ENCODE measurements at regions of chr12 and their contacts with region 1.

Region 1: GRCh38 chr12:104671407-104672098 is 214.8 kb downstream of the CHST11 start:
- DNase-seq: peak; percentile 94

Region 2: DNA sequence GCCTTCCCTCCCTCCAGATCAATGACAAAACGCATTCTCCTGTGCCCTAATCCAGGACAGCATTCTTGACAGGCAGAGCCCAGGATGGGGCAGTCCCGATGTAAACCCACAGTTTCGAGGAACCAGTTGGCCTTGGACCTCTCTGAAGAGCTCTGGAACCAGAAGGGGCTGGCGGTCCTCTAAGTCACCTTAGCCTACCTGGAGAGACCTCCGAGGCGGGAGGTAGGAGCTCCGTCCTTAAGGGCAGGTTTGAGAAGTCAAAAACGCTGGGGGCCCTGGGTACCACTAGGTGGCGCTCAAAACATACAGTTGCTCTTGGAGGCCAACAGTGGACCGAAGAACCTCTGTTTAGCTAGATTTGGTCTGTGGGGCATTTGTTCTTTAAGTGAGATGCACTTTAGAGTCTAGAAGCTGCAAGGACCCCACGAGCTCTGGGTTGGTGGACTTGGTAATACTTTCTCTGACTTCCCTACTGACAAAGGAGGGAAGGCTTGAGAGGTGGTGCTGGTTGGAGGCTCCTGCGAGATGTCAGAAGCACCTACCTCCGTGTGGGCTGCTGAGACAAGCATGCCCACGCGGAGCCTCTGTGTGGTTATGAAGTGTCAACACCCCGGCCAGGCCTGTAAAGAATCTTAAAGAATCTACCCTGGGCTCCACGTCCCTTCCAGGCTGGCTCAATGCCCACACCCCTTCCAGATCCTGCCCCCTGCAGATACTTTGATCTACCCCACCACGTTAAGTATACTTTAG is 289.6 kb before region 1 on chr12:
- intact Hi-C with region 1: loop called (anchors 10 kb)
- DNase-seq: peak; percentile 86

Region 3: DNA sequence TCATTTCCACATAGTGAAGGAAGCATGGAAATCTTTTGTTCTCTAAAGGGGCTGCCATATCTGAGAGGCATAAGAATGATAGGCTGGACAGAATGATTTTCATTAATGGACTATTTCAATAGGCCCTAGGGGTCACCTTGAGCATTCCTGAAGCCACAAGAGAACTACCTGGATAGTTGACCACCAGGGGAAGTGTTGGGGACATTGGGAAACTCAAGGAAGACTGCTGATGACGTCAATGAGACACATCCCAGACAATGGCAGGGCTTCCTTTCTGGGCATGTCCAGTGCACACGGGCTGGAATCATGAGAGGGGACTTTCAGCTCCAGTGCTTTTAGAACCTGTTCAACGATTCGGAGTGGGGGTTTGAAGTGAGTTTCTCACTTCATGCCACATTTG is 263.6 kb before region 1 on chr12:
- intact Hi-C with region 1: loop called (anchors 5 kb)
- DNase-seq: no peak

Region 4: GRCh38 chr12:104637604-104638003 is 33.9 kb before region 1 on chr12:
- intact Hi-C with region 1: loop called (anchors 2 kb)
- DNase-seq: peak; percentile 78

Region 5: DNA sequence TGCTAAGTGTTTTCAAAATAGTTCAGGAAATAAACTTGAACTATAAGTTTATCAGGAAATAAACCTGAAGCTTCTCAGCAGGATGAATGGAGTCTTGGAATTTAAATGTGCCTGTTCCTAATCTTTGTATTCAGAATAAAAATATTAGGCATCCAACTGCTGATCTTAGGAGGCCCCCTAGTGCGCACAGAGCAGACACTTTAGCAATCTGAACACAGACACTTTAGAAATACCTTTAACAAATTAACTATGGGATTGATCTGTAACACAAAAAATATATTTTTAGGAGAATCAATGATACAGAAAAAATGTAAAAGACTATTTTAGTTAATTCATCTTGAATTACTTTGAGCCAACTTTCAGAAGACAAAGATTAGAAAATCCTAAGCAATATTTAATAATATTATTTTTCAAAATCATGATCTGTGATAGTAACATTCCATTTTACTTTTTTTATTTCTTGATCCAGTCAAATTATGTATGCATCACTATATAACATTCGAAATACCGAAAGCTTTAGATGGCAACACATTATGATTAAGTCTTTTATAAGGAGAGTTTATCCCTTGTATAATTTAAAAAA is 205.7 kb after region 1 on chr12:
- intact Hi-C with region 1: loop called (anchors 10 kb)
- DNase-seq: no peak